Uterus (tissue), 4 donors: ENCODE measurements at regions of chr9 and their contacts with region 1.

Region 1: GRCh38 chr9:134407123-134407808 is 81.0 kb downstream of the RXRA start:
- DNase-seq: peak; percentile 85 to 86
- H3K4me3 ChIP-seq: peak overlapping the region in 1 of 2 donors; percentile 12
- H3K27ac ChIP-seq: peak overlapping the region; percentile 67 to 71
- H3K4me1 ChIP-seq: peaks cover 14 to 67% of the 10 kb centered on the region in 2 donors
- H3K27me3 ChIP-seq: no peaks in the 10 kb centered on the region
- CTCF ChIP-seq: no peak
- POLR2A ChIP-seq: peak in 1 of 2 donors; percentile 26

Region 2: GRCh38 chr9:134325817-134326723 is 81.2 kb before region 1 on chr9 and contains the start of gene RXRA:
- intact Hi-C with region 1: loop called (anchors 10 kb)
- DNase-seq: peak; percentile 85 to 86
- H3K4me3 ChIP-seq: peak within 1 kb of the TSS; percentile 74 to 95
- H3K27ac ChIP-seq: peak within 1 kb of the TSS; percentile 94 to 95
- H3K4me1 ChIP-seq: peaks cover 0 to 17% of the 10 kb centered on the region in 2 donors
- H3K27me3 ChIP-seq: no peaks in the 10 kb centered on the region
- CTCF ChIP-seq: peak in 2 of 4 experiments; percentile 17 to 50
- POLR2A ChIP-seq: peak in 1 of 2 donors; percentile 86
- total RNA-seq, gene RXRA: 17.1 to 84.6 (median 24.0) TPM